Posterior vena cava (tissue), 2 donors: ENCODE measurements at regions of chr6 and their contacts with region 1.

Region 1: GRCh38 chr6:165511807-165512206 is 151.2 kb downstream of the PDE10A start:
- DNase-seq: no peak

Region 2: GRCh38 chr6:164273491-164273890 is 1238.3 kb before region 1 on chr6:
- intact Hi-C with region 1: no loop called
- DNase-seq: no peak

Region 3: GRCh38 chr6:165488624-165489295 is 23.0 kb before region 1 on chr6:
- intact Hi-C with region 1: no loop called
- DNase-seq: no peak

Region 4: GRCh38 chr6:166032366-166033171 is 520.8 kb after region 1 on chr6:
- intact Hi-C with region 1: loop called in 1 of 2 experiments (anchors 10 kb)
- DNase-seq: peak; percentile 85